Transverse colon (tissue), 4 donors: ENCODE measurements at regions of chr4 and their contacts with region 1.

Region 1: GRCh38 chr4:79178760-79179159 is 147.1 kb downstream of the NAA11 start:
- DNase-seq: peak; percentile 8
- H3K4me3 ChIP-seq: no peak overlapping the region
- H3K27ac ChIP-seq: no peak overlapping the region
- H3K4me1 ChIP-seq: peaks cover 0 to 5% (median 2%) of the 10 kb centered on the region in 4 donors
- H3K27me3 ChIP-seq: no peaks in the 10 kb centered on the region
- CTCF ChIP-seq: no peak
- EP300 ChIP-seq: no peak
- POLR2A ChIP-seq: no peak

Region 2: DNA sequence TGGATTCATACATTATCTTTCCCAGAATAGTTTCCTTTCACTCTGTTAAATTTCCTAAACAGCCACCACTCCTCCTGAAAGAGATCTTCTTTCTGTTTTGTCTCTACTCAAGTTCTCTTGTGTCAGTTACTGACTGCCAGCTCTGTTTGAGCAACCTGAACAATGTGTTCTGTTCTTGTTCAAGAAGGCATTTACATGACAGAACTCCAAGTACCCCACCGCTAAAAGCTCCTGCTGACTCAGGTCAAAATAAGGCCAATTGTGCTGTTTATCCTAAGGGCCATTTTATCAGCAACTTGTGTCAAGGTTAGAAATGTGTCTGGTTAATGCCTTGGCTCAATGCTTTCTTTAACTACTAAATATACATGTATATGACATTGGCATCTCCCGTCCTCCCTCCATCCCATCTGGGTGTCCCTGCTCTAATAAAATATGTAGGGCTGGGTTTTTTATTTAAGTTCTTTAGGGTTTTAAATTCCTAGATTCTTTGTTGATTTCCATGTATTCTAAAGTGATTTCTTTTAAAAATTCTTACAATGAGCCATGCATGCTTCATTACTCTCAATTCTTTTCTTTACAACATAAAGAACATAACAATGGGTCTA is 95.3 kb before region 1 on chr4:
- in situ Hi-C with region 1: no loop called
- intact Hi-C with region 1: loop called (anchors 5 kb)
- DNase-seq: no peak
- H3K4me3 ChIP-seq: no peak overlapping the region
- H3K27ac ChIP-seq: peak overlapping the region in 3 of 4 donors; percentile 22 to 74 (median 45)
- H3K4me1 ChIP-seq: no peaks in the 10 kb centered on the region
- H3K27me3 ChIP-seq: no peaks in the 10 kb centered on the region
- CTCF ChIP-seq: no peak
- EP300 ChIP-seq: peak; percentile 90
- POLR2A ChIP-seq: no peak